Mammary epithelial cell (primary cell): ENCODE measurements at regions of chr5 and their contacts with region 1.

Region 1: DNA sequence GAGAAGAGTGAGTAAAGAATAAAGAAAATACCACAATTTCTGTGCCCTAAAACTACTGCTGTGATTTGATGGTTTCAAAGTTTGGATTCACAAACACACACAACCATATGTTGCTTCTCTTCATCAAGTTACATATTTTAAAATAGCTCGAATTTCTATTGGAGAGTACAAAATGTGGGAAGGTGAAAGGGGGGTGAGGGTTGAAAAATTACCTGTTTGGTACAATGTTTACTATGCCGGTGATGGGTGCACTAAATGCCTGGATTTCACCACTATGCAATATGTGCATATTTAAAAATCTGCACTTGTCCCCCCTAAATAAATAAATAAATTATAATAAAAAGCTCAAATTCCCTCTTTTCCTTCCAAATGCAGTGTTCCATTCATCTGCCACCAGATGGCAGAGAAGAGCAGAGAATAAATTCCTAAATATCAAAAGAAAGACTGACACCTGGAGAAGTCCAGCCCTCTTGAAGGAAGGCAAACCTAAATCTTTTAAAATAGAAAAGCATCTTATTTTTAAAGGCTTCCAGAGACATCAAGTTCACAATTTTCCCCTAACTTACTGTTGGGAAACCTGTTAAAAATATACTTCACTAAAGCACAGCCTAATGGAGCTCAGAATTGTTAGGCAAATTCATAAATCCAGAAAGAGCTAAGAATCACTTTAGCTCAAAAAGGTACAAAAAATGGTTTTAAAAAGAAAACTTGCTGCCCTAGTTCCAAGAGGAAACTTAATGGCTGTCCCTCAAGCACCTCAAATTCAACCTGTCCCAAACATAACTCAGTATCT is 24.8 kb upstream of the HNRNPA0 start:
- DNase-seq: peak; percentile 24
- H3K4me3 ChIP-seq: no peak overlapping the region
- H3K27ac ChIP-seq: no peak overlapping the region
- H3K4me1 ChIP-seq: no peaks in the 10 kb centered on the region
- H3K27me3 ChIP-seq: peaks cover 2% of the 10 kb centered on the region
- CTCF ChIP-seq: peak; percentile 70 to 75

Region 2: DNA sequence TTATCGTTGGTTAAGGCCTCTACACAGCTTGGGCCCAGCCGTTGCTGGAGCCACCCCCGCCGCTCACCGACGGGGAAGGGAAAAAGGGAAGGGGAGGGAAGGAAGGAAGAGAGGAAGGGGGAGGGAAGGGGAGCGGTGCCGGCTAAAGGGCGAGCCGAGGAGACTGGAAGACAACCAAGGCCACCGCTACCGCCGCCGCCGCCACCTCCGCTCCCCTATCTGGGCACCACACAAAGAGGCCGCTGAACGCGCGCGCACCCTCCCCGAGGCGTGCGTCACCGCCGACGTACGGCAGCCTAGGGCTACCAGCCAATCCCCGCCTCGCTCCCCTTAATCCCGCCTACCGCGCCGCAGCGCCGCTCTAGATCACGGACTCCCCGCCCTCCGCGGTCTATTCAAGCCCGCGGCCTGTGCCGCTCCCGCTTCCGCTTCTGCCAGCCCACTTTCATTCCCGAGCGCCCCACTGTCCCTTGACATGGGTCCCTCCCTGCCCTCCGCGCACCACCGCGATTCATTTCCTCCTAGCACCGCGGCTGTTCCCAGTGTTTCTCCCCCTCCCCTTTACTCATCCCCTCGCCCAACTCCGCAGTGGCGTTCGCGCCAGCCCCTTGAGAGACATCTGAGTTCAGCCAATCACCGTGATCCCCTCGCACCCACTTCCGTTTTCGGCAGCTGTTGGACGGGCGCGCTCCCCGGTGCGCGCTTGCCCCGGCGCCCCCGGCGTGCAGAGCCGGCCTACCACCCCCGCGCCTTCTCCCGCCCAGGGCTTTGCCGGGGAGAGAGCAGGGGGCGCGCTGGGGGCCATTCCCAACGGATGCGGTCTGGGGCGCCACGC is 24.6 kb before region 1 on chr5 and contains the start of gene HNRNPA0:
- CTCF ChIA-PET with region 1: interaction called, 10 read pairs
- dilution Hi-C with region 1: no loop called
- in situ Hi-C with region 1: no loop called
- intact Hi-C with region 1: no loop called
- DNase-seq: peak; percentile 95
- H3K4me3 ChIP-seq: peak within 1 kb of the TSS; percentile 62 to 92 (median 86)
- H3K27ac ChIP-seq: peak within 1 kb of the TSS; percentile 97
- H3K4me1 ChIP-seq: peaks cover 15% of the 10 kb centered on the region
- H3K27me3 ChIP-seq: no peaks in the 10 kb centered on the region
- CTCF ChIP-seq: no peak
- total RNA-seq, gene HNRNPA0: 15.8 to 22.2 TPM

Region 3: DNA sequence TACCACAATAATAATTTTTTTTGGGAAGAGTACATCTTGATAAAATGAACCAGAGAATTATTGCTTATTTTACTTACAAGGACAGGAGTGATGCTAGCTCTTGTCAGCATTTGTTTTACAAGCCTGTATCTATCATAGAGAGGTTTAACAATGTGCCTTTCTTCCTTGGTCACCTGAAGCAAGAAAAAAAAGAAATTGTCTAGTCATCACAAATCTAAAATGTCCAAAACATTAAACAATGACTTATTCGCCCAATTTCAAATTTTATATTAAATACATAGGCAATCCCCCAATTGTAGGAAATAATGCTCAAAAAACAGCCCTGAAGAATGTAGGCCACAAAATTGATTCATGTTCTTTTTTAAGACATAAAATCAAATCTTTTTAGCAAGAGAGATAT is 166.9 kb after region 1 on chr5:
- CTCF ChIA-PET with region 1: no interaction called
- dilution Hi-C with region 1: no loop called
- in situ Hi-C with region 1: no loop called
- intact Hi-C with region 1: loop called (anchors 10 kb)
- DNase-seq: no peak
- H3K4me3 ChIP-seq: no peak overlapping the region
- H3K27ac ChIP-seq: no peak overlapping the region
- H3K4me1 ChIP-seq: no peaks in the 10 kb centered on the region
- H3K27me3 ChIP-seq: no peaks in the 10 kb centered on the region
- CTCF ChIP-seq: no peak

Region 4: GRCh38 chr5:138065102-138065501 is 286.1 kb after region 1 on chr5:
- CTCF ChIA-PET with region 1: no interaction called
- dilution Hi-C with region 1: no loop called
- in situ Hi-C with region 1: no loop called
- intact Hi-C with region 1: loop called (anchors 1 kb)
- DNase-seq: no peak
- H3K4me3 ChIP-seq: no peak overlapping the region
- H3K27ac ChIP-seq: no peak overlapping the region
- H3K4me1 ChIP-seq: no peaks in the 10 kb centered on the region
- H3K27me3 ChIP-seq: no peaks in the 10 kb centered on the region
- CTCF ChIP-seq: peak in 1 of 2 donors; percentile 28

Region 5: GRCh38 chr5:138110266-138110963 is 331.4 kb after region 1 on chr5:
- CTCF ChIA-PET with region 1: no interaction called
- dilution Hi-C with region 1: no loop called
- in situ Hi-C with region 1: no loop called
- intact Hi-C with region 1: no loop called
- DNase-seq: no peak
- H3K4me3 ChIP-seq: no peak overlapping the region
- H3K27ac ChIP-seq: no peak overlapping the region
- H3K4me1 ChIP-seq: peaks cover 6% of the 10 kb centered on the region
- H3K27me3 ChIP-seq: no peaks in the 10 kb centered on the region
- CTCF ChIP-seq: no peak

Region 6: DNA sequence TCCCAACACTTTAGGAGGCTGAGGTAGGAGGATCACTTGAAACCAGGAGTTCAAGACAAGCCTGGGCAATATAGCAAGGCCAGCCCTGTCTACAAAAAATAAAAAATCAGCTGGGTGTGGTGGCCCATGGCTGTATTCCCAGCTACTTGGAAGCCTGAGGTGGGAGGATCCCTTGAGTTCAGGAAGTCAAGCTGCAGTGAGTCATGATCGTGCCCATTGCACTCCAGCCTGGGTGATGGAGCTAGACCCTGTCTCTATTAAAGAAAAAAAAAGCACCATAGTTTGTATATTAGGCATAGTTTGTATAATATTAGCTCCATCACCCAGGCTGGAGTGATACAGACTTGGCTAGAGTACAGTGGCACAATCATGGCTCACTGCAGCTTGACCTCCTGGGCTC is 369.8 kb after region 1 on chr5:
- CTCF ChIA-PET with region 1: no interaction called
- dilution Hi-C with region 1: no loop called
- in situ Hi-C with region 1: loop called in 1 of 2 experiments (anchors 10 kb)
- intact Hi-C with region 1: no loop called
- DNase-seq: peak; percentile 75
- H3K4me3 ChIP-seq: no peak overlapping the region
- H3K27ac ChIP-seq: no peak overlapping the region
- H3K4me1 ChIP-seq: peaks cover 11% of the 10 kb centered on the region
- H3K27me3 ChIP-seq: no peaks in the 10 kb centered on the region
- CTCF ChIP-seq: no peak